ENCODE measurements at regions of chr19 and their contacts with region 1.

Region 1: DNA sequence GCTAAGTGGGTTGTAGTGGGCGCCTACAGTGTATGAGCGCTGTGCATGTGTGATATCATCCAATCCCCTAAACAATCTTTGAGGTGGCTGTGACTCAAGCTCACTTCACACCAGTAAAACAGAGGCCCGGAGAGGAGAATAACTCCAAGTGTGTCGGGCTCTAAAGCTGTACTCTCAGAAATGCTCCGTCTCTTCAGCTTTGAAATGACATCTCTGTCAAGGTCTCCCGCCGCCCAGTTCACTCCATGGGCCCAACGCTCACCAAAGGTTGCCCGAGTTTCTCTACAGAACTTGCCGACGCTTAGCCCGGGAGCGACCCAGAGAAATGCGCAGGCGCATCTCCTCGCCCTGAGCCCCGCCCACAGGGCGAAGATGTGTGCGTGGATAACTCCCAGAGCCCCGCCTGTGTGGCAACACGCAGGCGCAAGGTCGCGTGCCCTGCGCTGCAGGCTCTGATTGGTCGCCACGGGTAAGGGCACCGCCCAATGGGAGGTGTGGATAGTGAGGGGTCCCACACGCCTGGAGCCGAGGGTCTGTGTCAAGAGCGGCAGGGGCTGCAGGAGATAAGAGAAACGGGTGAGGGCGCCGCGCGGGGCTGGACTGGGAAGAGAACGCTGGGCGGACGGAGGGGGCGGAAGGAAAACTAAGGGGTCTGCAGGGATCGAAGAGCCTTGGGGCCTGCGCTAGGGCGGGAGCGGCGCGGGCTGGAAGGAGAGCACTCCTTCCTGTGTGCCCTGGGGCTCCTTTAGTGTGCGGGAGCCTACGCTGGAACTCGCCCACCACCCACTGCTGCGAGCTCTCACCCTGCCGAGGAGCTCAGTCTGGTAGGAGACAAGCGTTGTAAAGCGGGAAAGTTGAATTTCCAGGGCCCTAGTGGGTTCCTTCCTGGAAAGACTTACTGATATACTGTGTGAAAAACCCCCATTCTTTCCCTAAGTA is at the start of gene ZNF526:
- DNase-seq: peak; percentile 99
- H3K4me3 ChIP-seq: peak within 1 kb of the TSS; percentile 75 to 85 (median 81)
- H3K27ac ChIP-seq: peak within 1 kb of the TSS; percentile 86 to 90 (median 89)
- H3K4me1 ChIP-seq: peaks cover 0 to 48% (median 46%) of the 10 kb centered on the region in 4 donors
- H3K27me3 ChIP-seq: no peaks in the 10 kb centered on the region
- CTCF ChIP-seq: no peak
- EP300 ChIP-seq: no peak
- POLR2A ChIP-seq: peak; percentile 38 to 60
- total RNA-seq, gene ZNF526: 2.2 to 6.1 (median 4.3) TPM

Region 2: GRCh38 chr19:42283143-42284065 is 63.3 kb after region 1 on chr19:
- intact Hi-C with region 1: loop called (anchors 2 kb)
- DNase-seq: peak; percentile 99
- H3K4me3 ChIP-seq: peak overlapping the region; percentile 18 to 76 (median 70)
- H3K27ac ChIP-seq: peak overlapping the region; percentile 94 to 99 (median 96)
- H3K4me1 ChIP-seq: peaks cover 0 to 74% (median 65%) of the 10 kb centered on the region in 4 donors
- H3K27me3 ChIP-seq: no peaks in the 10 kb centered on the region
- CTCF ChIP-seq: no peak
- EP300 ChIP-seq: no peak
- POLR2A ChIP-seq: peak; percentile 57 to 69

Measured in sigmoid colon (tissue), 7 donors.